Tibial artery (tissue), 4 donors: ENCODE measurements at regions of chr12 and their contacts with region 1.

Region 1: GRCh38 chr12:57904848-57905811 is 36.2 kb upstream of the ATP23 start:
- DNase-seq: peak; percentile 82 to 88
- H3K4me3 ChIP-seq: peak overlapping the region; percentile 20 to 26
- H3K27ac ChIP-seq: peak overlapping the region; percentile 51 to 55
- H3K4me1 ChIP-seq: peaks cover 0 to 22% (median 9%) of the 10 kb centered on the region in 4 donors
- H3K27me3 ChIP-seq: peaks cover 0 to 5% of the 10 kb centered on the region in 2 donors
- CTCF ChIP-seq: peak; percentile 100

Region 2: GRCh38 chr12:57631893-57632693 is 273.0 kb before region 1 on chr12:
- intact Hi-C with region 1: no loop called
- DNase-seq: peak in 1 of 2 donors; percentile 57
- H3K4me3 ChIP-seq: peak overlapping the region; percentile 52 to 73
- H3K27ac ChIP-seq: peak overlapping the region in 1 of 2 donors; percentile 31
- H3K4me1 ChIP-seq: peaks cover 0 to 22% (median 17%) of the 10 kb centered on the region in 4 donors
- H3K27me3 ChIP-seq: peaks cover 0 to 18% of the 10 kb centered on the region in 2 donors
- CTCF ChIP-seq: no peak

Region 3: GRCh38 chr12:57726151-57726883 is 178.8 kb before region 1 on chr12:
- intact Hi-C with region 1: loop called (anchors 10 kb)
- DNase-seq: peak; percentile 68 to 86
- H3K4me3 ChIP-seq: peak overlapping the region; percentile 62 to 86
- H3K27ac ChIP-seq: peak overlapping the region; percentile 65 to 73
- H3K4me1 ChIP-seq: peaks cover 0 to 19% (median 15%) of the 10 kb centered on the region in 4 donors
- H3K27me3 ChIP-seq: peaks cover 0 to 28% of the 10 kb centered on the region in 2 donors
- CTCF ChIP-seq: peak; percentile 65 to 73

Region 4: GRCh38 chr12:57803319-57803893 is 101.7 kb before region 1 on chr12:
- intact Hi-C with region 1: loop called (anchors 5 kb)
- DNase-seq: no peak
- H3K4me3 ChIP-seq: no peak overlapping the region
- H3K27ac ChIP-seq: peak overlapping the region; percentile 23 to 64
- H3K4me1 ChIP-seq: peaks cover 0 to 6% (median 4%) of the 10 kb centered on the region in 4 donors
- H3K27me3 ChIP-seq: no peaks in the 10 kb centered on the region
- CTCF ChIP-seq: peak; percentile 77 to 82

Region 5: DNA sequence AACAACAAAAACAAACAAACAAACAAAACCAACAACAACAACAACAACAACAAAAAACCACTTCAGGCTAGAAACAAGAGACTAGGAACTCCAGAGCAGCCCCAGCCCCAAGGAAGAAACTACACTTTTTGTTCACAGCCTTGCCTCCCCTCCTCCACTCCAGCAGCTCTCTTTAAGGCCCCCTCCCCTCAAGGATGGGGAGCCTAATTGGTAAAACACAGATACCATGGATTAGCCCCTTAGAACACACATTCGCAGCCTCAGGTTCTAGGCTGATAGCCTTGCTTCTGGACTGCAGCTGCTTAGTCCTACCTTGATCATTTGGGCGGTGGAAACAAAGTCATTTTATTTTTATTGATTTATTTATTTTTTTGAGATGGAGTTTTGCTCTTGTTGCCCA is 74.7 kb before region 1 on chr12:
- intact Hi-C with region 1: loop called (anchors 2 kb)
- DNase-seq: no peak
- H3K4me3 ChIP-seq: peak overlapping the region in 1 of 2 donors; percentile 5
- H3K27ac ChIP-seq: peak overlapping the region; percentile 61 to 100
- H3K4me1 ChIP-seq: peaks cover 8 to 95% (median 79%) of the 10 kb centered on the region in 4 donors
- H3K27me3 ChIP-seq: no peaks in the 10 kb centered on the region
- CTCF ChIP-seq: no peak

Region 6: DNA sequence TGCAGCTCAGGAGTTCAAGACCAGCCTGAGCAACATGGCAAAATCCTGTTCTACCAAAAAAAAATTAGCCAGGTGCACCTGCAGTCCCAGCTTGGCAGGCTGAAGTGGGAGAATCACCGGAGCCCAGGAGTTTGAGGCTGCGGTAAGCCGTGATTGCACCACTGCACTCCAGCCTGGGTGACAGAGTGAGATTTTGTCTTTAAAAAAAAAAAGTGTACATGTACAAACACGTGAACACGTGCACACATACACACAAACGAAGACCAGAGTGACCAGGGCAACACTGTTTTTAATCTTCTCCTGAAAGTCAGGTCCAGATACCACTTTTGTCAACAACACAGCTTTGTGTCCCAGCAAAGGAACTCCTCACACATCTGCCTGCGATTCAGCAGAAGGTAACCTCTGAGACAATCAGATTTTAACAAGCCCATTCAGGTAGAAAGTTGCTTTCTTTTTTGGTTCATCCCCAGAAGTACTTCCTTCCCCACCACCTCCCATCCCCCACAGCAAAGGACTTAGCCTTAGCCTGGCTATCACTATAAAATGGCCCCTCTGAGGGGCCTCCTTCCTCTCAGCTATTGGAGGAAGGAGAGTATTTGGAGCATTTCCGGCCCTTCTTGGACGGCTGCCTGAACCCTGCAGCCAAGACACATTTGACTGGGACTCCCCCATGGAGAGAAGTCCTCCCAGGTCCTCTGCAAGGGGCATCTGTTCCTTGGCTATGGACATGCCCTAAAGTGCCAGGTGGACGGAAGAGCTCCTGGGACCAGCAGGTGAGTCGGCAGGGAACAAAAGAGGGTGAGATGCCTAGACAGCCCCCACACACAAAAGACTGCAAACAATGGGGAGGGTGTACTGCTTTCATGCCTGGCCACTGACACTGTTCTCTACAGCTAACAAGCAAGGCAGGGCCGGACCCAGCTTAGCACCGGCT is 68.4 kb before region 1 on chr12:
- intact Hi-C with region 1: loop called (anchors 2 kb)
- DNase-seq: peak; percentile 78 to 84
- H3K4me3 ChIP-seq: peak overlapping the region; percentile 33 to 43
- H3K27ac ChIP-seq: peak overlapping the region; percentile 61 to 100
- H3K4me1 ChIP-seq: peaks cover 21 to 100% (median 98%) of the 10 kb centered on the region in 4 donors
- H3K27me3 ChIP-seq: no peaks in the 10 kb centered on the region
- CTCF ChIP-seq: no peak

Region 7: DNA sequence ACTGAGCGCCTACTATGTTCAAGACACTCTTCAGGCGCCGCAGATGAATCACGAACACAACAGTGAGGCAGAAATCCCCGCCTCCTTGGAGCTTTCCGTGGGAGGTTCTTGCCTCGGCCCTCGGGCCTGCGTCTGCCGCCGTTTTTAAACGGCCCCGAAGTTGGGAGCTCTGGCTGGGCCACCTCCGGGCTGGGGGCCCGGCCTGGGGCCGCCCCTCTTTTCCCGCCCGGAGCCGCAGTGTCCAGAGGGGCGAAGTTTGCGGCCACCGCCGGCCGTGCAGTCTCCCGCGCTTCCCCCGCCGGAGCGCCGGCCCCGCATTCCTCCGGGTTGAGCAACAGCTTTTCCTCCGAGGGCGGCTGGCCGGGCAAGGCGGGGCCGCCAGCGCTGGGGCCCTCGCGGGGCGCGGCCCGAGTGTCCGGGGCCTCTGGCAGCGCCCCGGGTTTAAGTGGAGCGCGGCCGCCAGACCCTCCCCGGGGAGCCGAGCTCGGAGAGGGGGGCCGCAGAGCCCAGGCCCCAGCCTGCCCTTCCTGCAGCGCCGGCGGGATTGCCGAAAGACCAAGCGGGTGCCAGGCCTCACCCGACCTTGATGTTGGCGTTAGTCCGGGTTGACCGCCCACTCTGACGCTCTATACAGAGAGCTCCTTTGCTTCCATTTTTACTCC is 39.9 kb before region 1 on chr12:
- intact Hi-C with region 1: no loop called
- DNase-seq: peak; percentile 79 to 94
- H3K4me3 ChIP-seq: peak overlapping the region; percentile 59 to 65
- H3K27ac ChIP-seq: peak overlapping the region; percentile 91
- H3K4me1 ChIP-seq: peaks cover 0 to 41% (median 29%) of the 10 kb centered on the region in 4 donors
- H3K27me3 ChIP-seq: no peaks in the 10 kb centered on the region
- CTCF ChIP-seq: no peak